ENCODE measurements at regions of chr11 and their contacts with region 1.

Region 1: DNA sequence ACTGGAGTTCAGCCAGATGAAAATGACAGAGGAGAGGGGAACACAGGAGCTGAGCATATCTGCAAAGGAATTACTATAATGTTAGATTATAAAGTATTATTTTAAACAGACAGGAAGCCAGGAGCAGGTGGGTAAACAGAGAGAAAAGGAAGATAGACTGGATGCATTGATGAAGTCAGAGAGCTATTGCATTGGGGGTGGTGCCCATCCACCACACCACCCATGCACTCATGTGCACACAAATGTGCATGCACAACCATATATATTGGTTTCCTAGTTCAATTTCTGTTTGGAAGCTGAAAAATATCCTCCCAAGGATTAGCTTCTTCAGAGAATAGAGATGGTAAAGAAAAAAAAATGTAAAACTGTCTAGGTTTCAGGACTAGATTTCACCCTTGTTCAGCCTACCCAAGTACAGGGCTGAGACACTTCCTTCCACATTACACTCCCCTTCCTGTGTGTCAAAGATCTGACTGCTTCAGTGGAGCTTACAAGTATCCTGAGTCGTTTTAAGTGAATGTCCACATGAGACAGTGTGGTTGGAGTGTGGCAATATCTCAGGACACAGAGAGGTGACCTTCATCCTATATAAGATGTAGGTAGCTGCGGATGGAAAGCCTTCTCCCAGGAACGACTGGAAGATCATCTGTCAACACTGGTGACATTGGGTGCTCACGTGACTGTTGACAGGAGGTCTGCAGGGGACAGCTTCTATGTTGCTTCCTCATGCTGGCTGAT is 12.2 kb upstream of the SMPD1 start:
- DNase-seq: no peak
- ATAC-seq: no peak
- H3K4me3 ChIP-seq: no peak overlapping the region
- H3K27ac ChIP-seq: no peak overlapping the region
- H3K4me1 ChIP-seq: peaks cover 0 to 4% of the 10 kb centered on the region in 2 experiments; a peak in 1 of 4 replicates
- H3K27me3 ChIP-seq: no peaks in the 10 kb centered on the region
- CTCF ChIP-seq: no peak
- POLR2A ChIP-seq: no peak
- RAD21 ChIP-seq: no peak

Region 2: DNA sequence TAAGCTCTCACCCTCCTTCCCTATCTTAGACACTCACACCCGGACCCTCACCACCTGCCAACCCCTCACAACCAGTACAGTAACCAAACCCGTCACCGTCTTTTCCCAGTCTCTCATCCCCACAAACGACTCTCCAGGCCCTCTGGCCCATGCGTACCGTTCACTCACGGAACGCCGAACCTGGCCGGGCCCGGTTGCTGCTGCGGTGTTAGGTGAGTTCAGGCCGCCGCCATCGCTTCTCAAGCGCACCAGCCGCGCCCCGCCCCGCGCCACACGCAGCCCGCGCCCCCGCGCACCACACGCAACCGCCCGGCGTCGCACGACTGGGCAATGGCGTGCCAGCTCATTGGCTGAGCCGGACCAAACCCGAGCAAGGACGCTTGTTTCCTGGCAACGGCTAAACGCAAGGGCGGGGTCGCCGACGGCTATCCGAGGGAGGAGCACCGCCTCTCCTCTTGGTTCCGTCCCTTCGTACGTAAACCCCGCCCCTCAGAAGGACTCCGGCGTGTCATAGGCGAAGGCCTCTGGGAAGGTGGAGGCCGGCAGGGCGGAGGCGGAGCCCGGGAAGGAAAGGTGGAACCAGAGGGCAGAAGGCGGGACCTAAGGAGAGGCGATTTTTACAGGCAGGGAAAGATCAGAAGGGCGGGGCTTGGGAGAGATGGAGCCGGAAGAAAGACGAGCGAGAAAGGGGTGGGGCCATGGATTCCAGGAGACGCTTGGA is 143.5 kb before region 1 on chr11 and contains the start of gene FHIP1B:
- CTCF ChIA-PET with region 1: no interaction called
- POLR2A ChIA-PET with region 1: no interaction called
- RAD21 ChIA-PET with region 1: no interaction called
- intact Hi-C with region 1: no loop called
- DNase-seq: peak; percentile 100
- ATAC-seq: peak; percentile 96
- H3K4me3 ChIP-seq: peak within 1 kb of the TSS; percentile 93 to 97
- H3K27ac ChIP-seq: peak within 1 kb of the TSS; percentile 64
- H3K4me1 ChIP-seq: peaks cover 0 to 16% of the 10 kb centered on the region in 2 experiments; a peak in 2 of 4 replicates
- H3K27me3 ChIP-seq: no peaks in the 10 kb centered on the region
- CTCF ChIP-seq: no peak
- POLR2A ChIP-seq: no peak
- RAD21 ChIP-seq: no peak
- total RNA-seq, gene FHIP1B: 32.1 TPM

Region 3: GRCh38 chr11:6389921-6390724 is 12.1 kb after region 1 on chr11 and contains the start of gene SMPD1:
- CTCF ChIA-PET with region 1: interaction called, 19 read pairs
- POLR2A ChIA-PET with region 1: no interaction called
- RAD21 ChIA-PET with region 1: no interaction called
- intact Hi-C with region 1: no loop called
- DNase-seq: peak; percentile 81
- ATAC-seq: peak; percentile 92
- H3K4me3 ChIP-seq: peak within 1 kb of the TSS; percentile 55 to 64
- H3K27ac ChIP-seq: peak within 1 kb of the TSS; percentile 48; the same call in 1 of the 2 replicates
- H3K4me1 ChIP-seq: peaks cover 14 to 37% of the 10 kb centered on the region in 2 experiments
- H3K27me3 ChIP-seq: no peaks in the 10 kb centered on the region
- CTCF ChIP-seq: no peak
- POLR2A ChIP-seq: no peak
- RAD21 ChIP-seq: no peak
- total RNA-seq, gene SMPD1: 2.8 TPM

Region 4: GRCh38 chr11:6481012-6481923 is 103.2 kb after region 1 on chr11 and contains the starts of genes ARFIP2 and TIMM10B:
- CTCF ChIA-PET with region 1: interaction called, 11 read pairs
- POLR2A ChIA-PET with region 1: interaction called, 6 read pairs
- RAD21 ChIA-PET with region 1: no interaction called
- intact Hi-C with region 1: no loop called
- DNase-seq: peak; percentile 94
- ATAC-seq: peak; percentile 94
- H3K4me3 ChIP-seq: peak within 1 kb of the TSS; percentile 86 to 96
- H3K27ac ChIP-seq: peak within 1 kb of the TSS; percentile 57
- H3K4me1 ChIP-seq: peaks cover 13 to 21% of the 10 kb centered on the region in 2 experiments; a peak in 3 of 4 replicates
- H3K27me3 ChIP-seq: no peaks in the 10 kb centered on the region
- CTCF ChIP-seq: no peak
- POLR2A ChIP-seq: peak; percentile 75
- RAD21 ChIP-seq: no peak
- total RNA-seq, gene ARFIP2: 77.9 TPM
- total RNA-seq, gene TIMM10B: 22.9 TPM

Region 5: DNA sequence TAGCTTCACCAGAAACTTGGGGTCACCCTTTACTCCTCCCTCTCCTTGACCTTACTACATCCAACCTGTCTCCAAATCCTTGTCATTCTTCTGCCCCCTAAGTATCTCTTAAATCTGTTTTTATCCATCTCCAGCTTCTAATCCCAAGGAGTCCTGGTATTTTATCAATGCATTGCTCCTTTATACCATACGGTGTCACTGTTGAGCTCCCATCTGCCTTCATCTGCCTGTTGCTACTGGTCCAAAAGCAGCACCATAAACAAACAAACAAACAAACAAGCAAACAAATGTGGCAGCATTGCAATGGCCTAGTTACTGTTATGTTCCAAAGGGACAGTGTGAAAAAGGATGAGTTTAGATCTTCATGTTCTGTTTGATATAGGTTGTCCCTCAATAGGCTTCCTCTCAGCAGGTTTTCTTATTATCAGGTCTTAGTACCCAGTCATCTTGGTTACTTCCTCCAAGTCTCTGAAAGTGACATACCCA is 153.2 kb after region 1 on chr11:
- CTCF ChIA-PET with region 1: interaction called, 14 read pairs
- POLR2A ChIA-PET with region 1: no interaction called
- RAD21 ChIA-PET with region 1: interaction called in 1 of 2 experiments, 3 read pairs
- intact Hi-C with region 1: no loop called
- DNase-seq: peak; percentile 45
- ATAC-seq: peak; percentile 93
- H3K4me3 ChIP-seq: no peak overlapping the region
- H3K27ac ChIP-seq: no peak overlapping the region
- H3K4me1 ChIP-seq: no peaks in the 10 kb centered on the region
- H3K27me3 ChIP-seq: no peaks in the 10 kb centered on the region
- CTCF ChIP-seq: peak; percentile 72 to 86 (median 82)
- POLR2A ChIP-seq: no peak
- RAD21 ChIP-seq: peak; percentile 86

Region 6: DNA sequence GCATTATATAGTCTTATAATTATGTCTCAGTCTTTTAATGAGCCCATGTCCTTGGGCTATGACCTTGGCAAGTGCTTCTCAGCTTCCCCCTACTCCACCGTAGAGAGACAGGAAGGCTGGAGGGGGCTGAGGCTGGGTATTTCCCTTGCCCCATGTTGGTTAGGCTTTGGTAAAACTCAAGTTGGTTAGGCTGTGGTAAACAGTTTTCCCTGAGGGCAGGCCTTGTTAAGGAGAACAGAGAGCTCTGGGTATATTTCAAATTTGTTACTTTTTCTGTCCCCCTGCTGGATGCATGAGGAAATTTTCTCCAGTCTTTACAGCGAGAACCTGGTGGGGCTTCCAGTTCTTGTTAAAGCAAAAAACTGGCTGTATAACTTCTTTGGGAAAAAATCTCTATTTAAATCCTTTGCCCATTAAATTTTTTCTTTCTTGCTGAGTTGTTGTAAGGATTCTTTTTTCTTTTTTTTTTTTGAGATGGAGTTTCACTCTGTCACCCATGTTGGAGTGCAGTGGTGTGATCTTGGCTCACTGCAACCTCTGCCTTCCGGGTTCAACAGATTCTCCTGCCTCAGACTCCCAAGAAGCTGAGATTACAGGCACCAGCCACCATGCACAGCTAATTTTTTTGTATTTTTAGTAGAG is 289.8 kb after region 1 on chr11:
- CTCF ChIA-PET with region 1: interaction called, 24 read pairs
- POLR2A ChIA-PET with region 1: no interaction called
- RAD21 ChIA-PET with region 1: no interaction called
- intact Hi-C with region 1: loop called (anchors 5 kb)
- DNase-seq: peak; percentile 38
- ATAC-seq: peak; percentile 94
- H3K4me3 ChIP-seq: no peak overlapping the region
- H3K27ac ChIP-seq: no peak overlapping the region
- H3K4me1 ChIP-seq: peaks cover 0 to 4% of the 10 kb centered on the region in 2 experiments; a peak in 2 of 4 replicates
- H3K27me3 ChIP-seq: no peaks in the 10 kb centered on the region
- CTCF ChIP-seq: peak; percentile 61 to 63 (median 63); a peak in 5 of 6 replicates
- POLR2A ChIP-seq: no peak
- RAD21 ChIP-seq: peak; percentile 49

Region 7: GRCh38 chr11:6705905-6706535 is 327.9 kb after region 1 on chr11:
- CTCF ChIA-PET with region 1: interaction called, 53 read pairs
- POLR2A ChIA-PET with region 1: no interaction called
- RAD21 ChIA-PET with region 1: interaction called, 3 to 5 read pairs
- intact Hi-C with region 1: loop called (anchors 1 kb)
- DNase-seq: no peak
- ATAC-seq: peak; percentile 71
- H3K4me3 ChIP-seq: no peak overlapping the region
- H3K27ac ChIP-seq: no peak overlapping the region
- H3K4me1 ChIP-seq: no peaks in the 10 kb centered on the region
- H3K27me3 ChIP-seq: no peaks in the 10 kb centered on the region
- CTCF ChIP-seq: peak; percentile 80 to 93 (median 90)
- POLR2A ChIP-seq: no peak
- RAD21 ChIP-seq: peak; percentile 76

Region 8: DNA sequence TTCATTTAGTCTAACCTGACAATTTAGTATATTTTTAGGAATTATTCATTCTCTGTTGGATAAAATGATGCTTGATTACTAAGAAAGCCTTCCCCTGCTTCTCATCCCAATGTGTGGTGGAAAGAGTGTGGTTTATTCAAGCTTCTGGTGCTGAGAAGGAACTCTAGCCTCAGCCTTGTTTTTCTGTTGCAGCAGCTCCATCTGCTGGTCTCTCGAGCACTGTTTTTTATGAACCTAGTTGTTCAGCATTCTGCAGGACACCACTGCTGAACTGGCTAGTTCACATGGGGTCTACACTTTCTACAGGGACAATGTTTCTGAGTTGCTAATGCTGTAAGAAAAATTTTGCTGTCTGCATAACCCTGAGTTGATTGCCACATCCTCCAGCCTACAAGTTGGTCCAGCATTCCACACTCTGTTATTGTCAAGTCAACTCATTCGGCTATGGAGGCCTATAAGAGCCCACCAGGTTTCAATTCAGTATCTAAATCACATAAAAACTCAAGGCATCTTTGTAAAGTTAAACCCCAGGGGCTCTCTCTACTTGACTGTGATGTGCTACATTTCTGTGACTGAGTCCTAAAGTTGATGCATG is 379.4 kb after region 1 on chr11:
- CTCF ChIA-PET with region 1: interaction called, 21 read pairs
- POLR2A ChIA-PET with region 1: no interaction called
- RAD21 ChIA-PET with region 1: no interaction called
- intact Hi-C with region 1: loop called (anchors 5 kb)
- DNase-seq: peak; percentile 32
- ATAC-seq: peak; percentile 89
- H3K4me3 ChIP-seq: no peak overlapping the region
- H3K27ac ChIP-seq: no peak overlapping the region
- H3K4me1 ChIP-seq: no peaks in the 10 kb centered on the region
- H3K27me3 ChIP-seq: no peaks in the 10 kb centered on the region
- CTCF ChIP-seq: peak; percentile 51 to 69 (median 61); a peak in 5 of 6 replicates
- POLR2A ChIP-seq: no peak
- RAD21 ChIP-seq: peak; percentile 60

Measured in HCT116 (cell line).